ENCODE measurements at regions of chr6 and their contacts with region 1.

Region 1: DNA sequence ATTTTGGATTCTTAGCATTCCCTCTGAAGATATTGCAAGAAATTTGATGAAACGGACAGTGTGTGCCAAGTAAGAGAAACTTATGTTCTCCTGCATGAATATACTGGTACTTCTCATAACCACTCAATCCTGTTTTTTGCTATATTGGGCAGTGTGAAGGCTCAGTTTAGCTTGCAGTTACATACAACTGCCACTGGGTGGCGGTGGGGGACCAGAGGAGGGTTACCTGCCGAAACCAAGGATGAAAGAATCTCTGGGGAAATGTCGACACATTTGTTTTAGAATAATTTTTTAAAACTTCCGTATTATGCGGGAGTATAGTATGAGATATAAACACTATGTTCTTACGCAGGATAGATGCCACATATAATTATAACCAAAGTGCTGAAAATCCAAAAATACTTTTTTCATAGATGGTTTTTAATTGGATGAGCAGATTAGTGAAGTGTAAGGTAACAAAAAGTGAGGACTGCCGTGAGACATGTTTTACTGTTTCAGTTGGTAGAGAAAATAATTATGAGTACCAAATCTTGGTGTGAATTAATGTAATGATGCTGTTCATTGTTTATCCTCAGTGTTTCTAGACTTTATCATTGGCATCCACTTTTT is 9.7 kb downstream of the TRMT11 start:
- DNase-seq: peak; percentile 45 to 82
- H3K4me3 ChIP-seq: no peak overlapping the region
- H3K4me3 Mint-ChIP-seq: no peak overlapping the region
- H3K27ac Mint-ChIP-seq: no peak overlapping the region
- H3K4me1 ChIP-seq: no peaks in the 10 kb centered on the region
- H3K4me1 Mint-ChIP-seq: peaks cover 7% of the 10 kb centered on the region
- H3K27me3 ChIP-seq: no peaks in the 10 kb centered on the region
- H3K27me3 Mint-ChIP-seq: no peaks in the 10 kb centered on the region
- CTCF ChIP-seq: peak; percentile 90 to 94

Region 2: GRCh38 chr6:126112144-126112632 is 116.1 kb after region 1 on chr6:
- CTCF ChIA-PET with region 1: no interaction called
- POLR2A ChIA-PET with region 1: no interaction called
- intact Hi-C with region 1: loop called (anchors 1 kb)
- DNase-seq: peak in 1 of 2 experiments; percentile 31
- H3K4me3 ChIP-seq: no peak overlapping the region
- H3K4me3 Mint-ChIP-seq: no peak overlapping the region
- H3K27ac Mint-ChIP-seq: no peak overlapping the region
- H3K4me1 ChIP-seq: no peaks in the 10 kb centered on the region
- H3K4me1 Mint-ChIP-seq: no peaks in the 10 kb centered on the region
- H3K27me3 ChIP-seq: no peaks in the 10 kb centered on the region
- H3K27me3 Mint-ChIP-seq: no peaks in the 10 kb centered on the region
- CTCF ChIP-seq: peak in 1 of 2 experiments; percentile 13

Region 3: GRCh38 chr6:126170978-126171382 is 174.9 kb after region 1 on chr6:
- CTCF ChIA-PET with region 1: no interaction called
- POLR2A ChIA-PET with region 1: no interaction called
- intact Hi-C with region 1: loop called (anchors 10 kb)
- DNase-seq: peak in 1 of 2 experiments; percentile 46
- H3K4me3 ChIP-seq: no peak overlapping the region
- H3K4me3 Mint-ChIP-seq: no peak overlapping the region
- H3K27ac Mint-ChIP-seq: no peak overlapping the region
- H3K4me1 ChIP-seq: peaks cover 4% of the 10 kb centered on the region; the same call in 1 of the 2 replicates
- H3K4me1 Mint-ChIP-seq: peaks cover 16% of the 10 kb centered on the region
- H3K27me3 ChIP-seq: no peaks in the 10 kb centered on the region
- H3K27me3 Mint-ChIP-seq: no peaks in the 10 kb centered on the region
- CTCF ChIP-seq: peak; percentile 35 to 41

Region 4: DNA sequence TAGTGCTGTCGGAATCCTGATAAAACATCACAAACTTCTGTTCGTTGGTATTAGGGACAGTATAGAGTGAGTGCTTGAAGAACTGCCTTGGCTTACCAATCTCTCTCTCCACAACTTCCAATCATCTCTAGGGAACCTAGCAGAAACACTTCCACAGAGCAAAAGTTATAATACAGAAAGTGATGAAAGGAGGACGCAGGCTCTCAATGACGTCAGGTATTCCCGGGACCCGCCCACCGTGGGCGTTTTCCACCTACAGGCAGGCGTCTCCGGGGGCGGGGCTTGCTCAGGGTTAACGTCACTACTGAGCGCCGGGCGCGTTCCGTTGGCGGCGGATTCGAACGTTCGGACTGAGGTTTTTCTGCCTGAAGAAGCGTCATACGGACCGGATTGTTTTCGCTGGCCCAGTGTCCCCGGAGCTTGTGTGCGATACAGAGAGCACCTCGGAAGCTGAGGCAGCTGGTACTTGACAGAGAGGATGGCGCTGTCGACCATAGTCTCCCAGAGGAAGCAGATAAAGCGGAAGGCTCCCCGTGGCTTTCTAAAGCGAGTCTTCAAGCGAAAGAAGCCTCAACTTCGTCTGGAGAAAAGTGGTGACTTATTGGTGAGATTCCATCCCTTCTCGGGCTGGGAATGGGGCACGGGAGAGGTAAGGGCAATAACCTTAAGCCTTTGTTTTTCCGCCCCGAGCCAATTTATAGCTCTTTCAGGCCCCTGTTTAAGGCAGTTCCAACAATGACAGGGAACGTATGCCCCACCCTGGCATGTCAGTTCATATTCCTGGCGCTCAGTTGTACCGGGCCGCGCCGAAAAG is 343.9 kb after region 1 on chr6 and contains the start of gene CENPW:
- CTCF ChIA-PET with region 1: no interaction called
- POLR2A ChIA-PET with region 1: no interaction called
- intact Hi-C with region 1: loop called (anchors 10 kb)
- DNase-seq: peak; percentile 94 to 96
- H3K4me3 ChIP-seq: peak within 1 kb of the TSS; percentile 79
- H3K4me3 Mint-ChIP-seq: no peak within 1 kb of the TSS
- H3K27ac Mint-ChIP-seq: no peak within 1 kb of the TSS
- H3K4me1 ChIP-seq: 0 out of 2 replicates have a peak, but pooled peaks cover 4% of the 10 kb centered on the region
- H3K4me1 Mint-ChIP-seq: peaks cover 15% of the 10 kb centered on the region
- H3K27me3 ChIP-seq: no peaks in the 10 kb centered on the region
- H3K27me3 Mint-ChIP-seq: no peaks in the 10 kb centered on the region
- CTCF ChIP-seq: no peak
- total RNA-seq, gene CENPW: 64.4 and 70.7 TPM in 2 replicates

Measured in Caco-2 (cell line).